Activated CD4-positive, alpha-beta T cell treated with anti-CD3 and anti-CD28 coated beads, Interleukin-2, amount 10 ng/mL, durations not matched to agents 24 days and 14 days (primary cell): ENCODE measurements at regions of chr15 and their contacts with region 1.

Region 1: DNA sequence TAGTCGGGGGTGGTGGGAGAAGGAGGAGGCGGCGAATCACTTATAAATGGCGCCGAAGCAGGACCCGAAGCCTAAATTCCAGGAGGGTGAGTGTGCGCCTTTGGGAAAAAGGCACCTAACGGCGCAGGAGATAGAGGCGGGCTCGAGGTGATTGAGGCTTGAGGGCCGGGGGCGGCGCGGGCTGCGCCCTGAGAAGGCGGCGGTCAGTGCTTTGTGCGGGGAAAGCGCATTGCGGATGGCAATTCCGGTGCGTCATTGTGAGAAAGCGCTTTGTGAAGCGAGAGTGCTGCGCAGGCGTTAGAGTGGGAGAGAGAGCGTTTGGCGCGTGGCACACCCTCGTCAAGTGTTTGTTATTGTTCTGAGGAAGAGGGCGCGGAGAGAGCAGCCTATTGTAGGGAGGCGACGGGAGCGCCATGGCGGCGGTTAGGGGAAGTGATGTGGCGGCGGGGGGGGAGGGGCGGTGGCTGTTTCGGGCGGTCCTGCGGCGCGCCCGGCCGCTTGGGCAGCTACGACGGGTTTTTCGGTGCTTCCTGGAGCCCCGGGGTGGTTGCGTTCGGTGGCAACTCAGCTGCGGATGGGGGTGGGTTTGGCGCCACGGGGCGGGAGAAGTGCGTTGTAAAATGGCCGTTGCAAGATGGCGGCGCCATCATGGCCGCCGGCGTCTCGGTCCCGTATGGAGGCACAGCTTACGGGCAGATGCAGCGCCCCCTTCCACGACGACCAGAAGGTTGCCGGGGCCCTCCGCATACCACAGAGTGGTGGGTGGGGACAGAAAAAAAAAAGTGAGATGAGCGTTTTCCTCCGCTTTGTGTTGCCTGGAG is 492 bp downstream of the MORF4L1 start:
- DNase-seq: peak; percentile 97
- H3K4me3 Mint-ChIP-seq: peak overlapping the region; percentile 96
- H3K27ac Mint-ChIP-seq: peak overlapping the region; percentile 100
- H3K4me1 Mint-ChIP-seq: peaks cover 38% of the 10 kb centered on the region
- H3K27me3 Mint-ChIP-seq: no peaks in the 10 kb centered on the region

Region 2: DNA sequence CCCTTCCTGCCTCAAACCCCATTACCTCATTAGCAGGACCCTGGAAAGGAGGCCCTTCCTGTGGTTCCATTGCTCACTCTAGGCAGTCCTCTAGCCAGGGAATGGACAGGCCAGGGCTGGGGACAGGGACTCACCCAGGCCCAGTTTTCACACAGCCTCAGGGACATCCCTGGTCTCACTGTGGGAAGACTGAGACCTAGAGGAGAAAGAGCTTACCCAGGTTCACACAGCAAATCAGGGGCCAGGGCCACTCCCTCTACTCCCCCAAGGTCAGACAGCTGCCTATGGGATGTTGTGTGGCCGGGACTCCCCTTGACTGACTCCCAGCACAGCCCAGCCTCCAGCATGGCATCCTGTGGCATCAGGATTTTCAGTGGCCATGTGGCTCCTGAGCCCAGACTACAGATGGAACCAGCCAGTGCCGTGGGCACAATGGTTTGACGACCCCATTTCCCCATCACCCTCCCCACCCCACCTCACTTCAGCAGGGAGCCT is 111.2 kb before region 1 on chr15:
- intact Hi-C with region 1: loop called (anchors 5 kb)
- DNase-seq: no peak
- H3K4me3 Mint-ChIP-seq: peak overlapping the region; percentile 35
- H3K27ac Mint-ChIP-seq: peak overlapping the region; percentile 91
- H3K4me1 Mint-ChIP-seq: peaks cover 20% of the 10 kb centered on the region
- H3K27me3 Mint-ChIP-seq: no peaks in the 10 kb centered on the region

Region 3: DNA sequence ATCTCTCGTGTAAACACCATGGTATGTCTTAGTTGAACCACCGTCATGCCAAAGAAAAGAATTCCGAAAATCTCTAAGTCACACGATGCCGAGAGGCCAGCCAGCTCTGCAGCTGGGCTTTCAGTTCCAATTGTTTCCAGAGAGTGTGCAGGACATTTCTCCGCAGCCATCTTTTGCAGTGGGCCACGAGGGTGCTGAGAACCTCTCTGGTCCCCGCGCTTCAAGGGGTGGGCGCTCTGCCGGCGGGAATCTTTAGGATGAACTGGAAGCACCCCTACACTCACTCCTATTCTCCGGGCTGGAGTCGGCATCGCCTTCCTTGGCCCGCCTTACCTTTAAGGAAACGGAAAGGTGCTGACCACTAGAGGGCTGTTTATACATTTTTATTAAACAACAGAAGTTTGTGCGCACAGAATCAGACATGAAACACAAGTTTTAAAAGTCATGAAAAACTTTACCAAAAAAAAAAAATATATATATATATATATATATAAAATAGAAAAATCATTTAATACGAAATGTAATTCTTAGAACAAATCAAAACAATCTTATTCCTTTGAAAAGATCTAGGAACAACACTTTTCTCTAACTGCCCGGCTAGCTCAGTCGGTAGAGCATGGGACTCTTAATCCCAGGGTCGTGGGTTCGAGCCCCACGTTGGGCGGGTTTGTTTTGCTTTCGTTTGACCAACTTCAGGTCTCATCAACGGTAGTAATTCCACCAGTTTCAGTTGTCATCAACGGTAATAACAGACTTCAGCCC is 13.0 kb before region 1 on chr15:
- intact Hi-C with region 1: loop called (anchors 1 kb)
- DNase-seq: peak; percentile 92
- H3K4me3 Mint-ChIP-seq: peak overlapping the region; percentile 83
- H3K27ac Mint-ChIP-seq: peak overlapping the region; percentile 81
- H3K4me1 Mint-ChIP-seq: peaks cover 6% of the 10 kb centered on the region
- H3K27me3 Mint-ChIP-seq: peaks cover 8% of the 10 kb centered on the region